ENCODE measurements at regions of chr10 and their contacts with region 1.

Region 1: DNA sequence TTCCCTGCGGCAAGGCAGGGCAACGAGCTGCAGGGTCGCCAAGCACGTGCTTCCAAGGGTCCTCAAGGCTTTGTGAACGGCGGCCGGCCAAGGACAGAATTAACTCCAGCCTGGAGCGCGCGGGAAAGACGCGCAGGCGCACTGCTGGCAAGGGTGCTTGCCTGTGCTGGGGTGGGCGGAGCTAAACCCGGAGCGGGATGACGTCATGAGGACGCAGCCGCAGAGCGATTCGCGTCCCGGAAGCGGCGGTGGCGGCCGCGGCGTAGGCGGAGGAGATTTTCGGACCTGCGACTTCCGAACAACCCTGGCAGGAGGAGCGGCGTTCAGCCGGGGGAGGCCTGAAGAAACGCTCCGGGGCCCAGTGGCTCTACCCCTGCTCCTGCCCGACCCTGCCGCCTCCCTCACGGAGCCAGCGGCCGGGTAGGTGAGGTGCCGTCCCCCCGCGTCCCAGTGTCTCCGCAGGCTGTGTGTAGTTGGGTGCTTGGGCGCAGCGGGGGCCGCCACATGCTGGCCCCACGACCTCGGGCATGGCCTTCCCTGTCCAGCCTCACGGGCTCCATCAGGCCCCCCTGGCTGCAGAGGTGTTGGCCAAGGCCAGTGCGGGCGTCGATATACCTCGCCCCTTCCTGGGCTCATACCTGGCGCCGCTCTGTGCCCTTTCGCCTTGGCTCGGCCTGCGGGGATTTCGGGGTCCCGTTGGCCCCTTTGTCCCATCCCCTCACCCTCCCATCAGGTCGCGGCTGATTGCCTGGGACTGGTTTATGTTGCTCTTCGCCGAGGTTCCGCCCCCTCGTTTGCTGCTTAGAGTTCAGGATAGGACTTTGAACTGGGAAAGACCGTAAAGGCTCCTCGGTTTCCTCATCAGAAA is at the start of gene ZFYVE27:
- DNase-seq: peak; percentile 88 to 98 (median 95)

Region 2: DNA sequence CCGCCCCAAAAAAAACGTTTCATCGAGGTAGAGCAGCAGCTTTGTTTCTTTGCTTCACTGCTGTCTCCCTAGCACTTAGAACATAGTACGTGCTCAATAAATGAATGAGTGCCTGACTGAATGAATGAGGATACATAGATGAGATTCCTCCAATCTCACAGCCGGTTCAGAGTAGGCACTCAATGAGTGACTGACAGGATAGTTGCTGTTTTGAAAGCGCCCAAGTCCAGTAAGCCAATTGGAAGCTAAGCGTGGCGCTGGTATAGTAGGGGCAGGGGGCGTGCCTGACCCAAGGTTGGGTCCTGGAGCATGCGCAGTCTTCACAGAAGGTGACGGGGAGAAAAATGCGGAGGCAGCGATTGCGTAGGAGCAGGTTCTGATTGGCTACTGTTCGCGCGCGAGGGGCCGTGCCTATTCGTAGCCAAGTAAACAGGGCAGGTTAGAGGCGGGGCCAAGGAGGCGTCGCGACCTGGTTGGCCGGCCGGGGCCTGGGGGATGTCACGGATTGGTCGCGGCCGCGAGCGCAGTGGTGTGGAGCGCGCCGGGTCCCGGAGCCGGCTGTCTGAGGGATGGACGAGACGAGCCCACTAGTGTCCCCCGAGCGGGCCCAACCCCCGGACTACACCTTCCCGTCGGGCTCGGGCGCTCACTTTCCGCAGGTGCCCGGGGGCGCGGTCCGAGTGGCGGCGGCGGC is 96.8 kb before region 1 on chr10 and contains the start of gene PI4K2A:
- intact Hi-C with region 1: no loop called
- DNase-seq: peak; percentile 98 to 100 (median 99)

Region 3: GRCh38 chr10:97686962-97687784 is 50.0 kb before region 1 on chr10 and contains the start of gene AVPI1:
- intact Hi-C with region 1: loop called (anchors 10 kb)
- DNase-seq: peak; percentile 85 to 97 (median 93)